ENCODE measurements at regions of chr20 and their contacts with region 1.

Region 1: DNA sequence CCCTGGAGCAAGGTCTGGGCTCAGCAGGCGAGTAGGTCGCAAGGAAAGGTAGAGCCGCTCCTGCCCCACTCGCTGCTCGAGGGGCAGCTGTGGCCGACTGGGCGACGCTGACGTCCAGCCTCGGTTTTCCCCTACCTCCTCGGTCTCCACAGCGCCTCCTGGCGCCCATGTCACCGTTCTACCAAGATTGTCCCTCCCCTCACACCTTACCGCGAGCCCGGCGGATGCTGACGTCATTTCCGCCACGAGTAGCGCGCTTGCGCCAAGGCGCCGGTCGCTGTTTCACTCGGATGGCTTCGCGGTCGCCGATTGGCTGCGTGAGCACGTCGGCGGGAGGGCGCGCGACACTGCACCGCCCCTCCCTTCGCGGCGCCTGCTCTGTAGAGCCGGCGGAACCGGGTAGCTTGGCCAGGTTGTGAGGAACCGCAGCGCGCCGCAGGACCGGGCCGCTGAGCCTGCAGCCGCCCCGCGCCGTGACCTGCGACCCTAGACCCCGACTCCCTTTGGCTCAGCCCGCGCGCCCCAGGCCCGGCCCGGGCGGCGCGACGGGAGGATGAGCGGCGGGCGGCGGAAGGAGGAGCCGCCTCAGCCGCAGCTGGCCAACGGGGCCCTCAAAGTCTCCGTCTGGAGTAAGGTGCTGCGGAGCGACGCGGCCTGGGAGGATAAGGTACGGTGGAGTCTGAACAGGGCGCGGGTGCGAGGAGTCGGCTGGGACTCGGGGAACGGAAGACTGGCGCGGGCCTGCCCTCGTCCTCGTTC is at the start of gene RAB5IF:
- DNase-seq: peak; percentile 99 to 100
- ATAC-seq: peak; percentile 81 to 95 (median 84)
- H3K4me3 ChIP-seq: peak within 1 kb of the TSS; percentile 89
- H3K4me3 Mint-ChIP-seq: peak within 1 kb of the TSS; percentile 98
- H3K27ac ChIP-seq: peak within 1 kb of the TSS; percentile 91
- H3K27ac Mint-ChIP-seq: peak within 1 kb of the TSS; percentile 99
- H3K4me1 ChIP-seq: peaks cover 35% of the 10 kb centered on the region
- H3K4me1 Mint-ChIP-seq: peaks cover 29 to 38% of the 10 kb centered on the region in 2 donors
- H3K27me3 ChIP-seq: no peaks in the 10 kb centered on the region
- H3K27me3 Mint-ChIP-seq: no peaks in the 10 kb centered on the region
- CTCF ChIP-seq: peak; percentile 87
- total RNA-seq, gene RAB5IF: 158 to 265 (median 247) TPM

Region 2: GRCh38 chr20:36550797-36551299 is 54.7 kb before region 1 on chr20:
- intact Hi-C with region 1: loop called (anchors 2 kb)
- DNase-seq: no peak
- ATAC-seq: no peak
- H3K4me3 ChIP-seq: no peak overlapping the region
- H3K4me3 Mint-ChIP-seq: no peak overlapping the region
- H3K27ac ChIP-seq: no peak overlapping the region
- H3K27ac Mint-ChIP-seq: no peak overlapping the region
- H3K4me1 ChIP-seq: no peaks in the 10 kb centered on the region
- H3K4me1 Mint-ChIP-seq: no peaks in the 10 kb centered on the region
- H3K27me3 ChIP-seq: no peaks in the 10 kb centered on the region
- H3K27me3 Mint-ChIP-seq: no peaks in the 10 kb centered on the region
- CTCF ChIP-seq: no peak

Region 3: GRCh38 chr20:36562724-36563123 is 42.9 kb before region 1 on chr20:
- intact Hi-C with region 1: loop called (anchors 1 kb)
- DNase-seq: no peak
- ATAC-seq: no peak
- H3K4me3 ChIP-seq: no peak overlapping the region
- H3K4me3 Mint-ChIP-seq: no peak overlapping the region
- H3K27ac ChIP-seq: no peak overlapping the region
- H3K27ac Mint-ChIP-seq: peak overlapping the region; percentile 86 to 90
- H3K4me1 ChIP-seq: peaks cover 16% of the 10 kb centered on the region
- H3K4me1 Mint-ChIP-seq: peaks cover 19 to 20% of the 10 kb centered on the region in 2 donors
- H3K27me3 ChIP-seq: no peaks in the 10 kb centered on the region
- H3K27me3 Mint-ChIP-seq: no peaks in the 10 kb centered on the region
- CTCF ChIP-seq: no peak

Region 4: DNA sequence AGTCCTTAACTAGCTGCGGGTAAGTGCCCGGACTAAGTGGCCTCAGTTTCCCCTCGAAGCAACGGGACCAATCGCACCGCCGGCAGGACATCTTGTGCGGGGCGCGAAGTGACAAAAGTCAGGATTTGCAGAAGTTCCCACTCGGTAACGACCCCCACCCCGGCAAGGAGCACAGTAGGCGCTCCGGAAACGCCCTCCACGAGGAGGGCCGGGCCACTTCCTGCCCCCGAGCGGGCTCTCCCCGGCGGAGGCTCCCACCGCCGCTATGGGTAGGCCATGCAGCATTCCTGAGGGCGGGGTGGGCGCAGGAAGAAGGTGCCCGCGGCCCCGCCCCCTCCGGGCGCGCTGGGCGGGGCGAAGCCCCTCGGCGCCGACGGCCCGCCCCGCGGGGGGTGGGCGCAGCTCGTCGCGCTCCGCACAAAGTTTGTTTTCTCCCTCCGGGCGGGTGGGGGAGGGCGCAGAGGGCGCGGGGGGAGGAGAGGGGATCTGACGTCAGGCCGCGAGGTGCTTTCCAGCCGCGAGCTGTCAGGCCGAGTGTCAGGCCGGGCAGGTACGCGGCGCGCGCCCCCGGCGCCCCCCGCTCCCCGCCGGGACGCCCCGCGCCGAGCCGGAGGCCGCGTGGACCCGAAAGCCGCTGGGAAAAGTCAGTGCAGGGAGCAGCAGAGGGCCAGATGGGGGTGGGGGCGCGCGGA is 32.3 kb before region 1 on chr20 and contains the start of gene TGIF2:
- intact Hi-C with region 1: loop called (anchors 1 kb)
- DNase-seq: peak; percentile 78 to 96
- ATAC-seq: peak; percentile 67 to 89 (median 81)
- H3K4me3 ChIP-seq: peak within 1 kb of the TSS; percentile 100
- H3K4me3 Mint-ChIP-seq: peak within 1 kb of the TSS; percentile 92
- H3K27ac ChIP-seq: peak within 1 kb of the TSS; percentile 98
- H3K27ac Mint-ChIP-seq: peak within 1 kb of the TSS; percentile 90 to 93
- H3K4me1 ChIP-seq: peaks cover 23% of the 10 kb centered on the region
- H3K4me1 Mint-ChIP-seq: peaks cover 28 to 31% of the 10 kb centered on the region in 2 donors
- H3K27me3 ChIP-seq: no peaks in the 10 kb centered on the region
- H3K27me3 Mint-ChIP-seq: no peaks in the 10 kb centered on the region
- CTCF ChIP-seq: no peak
- total RNA-seq, gene TGIF2: 19.9 to 28.5 (median 25.9) TPM

Region 5: GRCh38 chr20:36591854-36592641 is 13.5 kb before region 1 on chr20:
- intact Hi-C with region 1: loop called (anchors 1 kb)
- DNase-seq: peak in 1 of 2 donors; percentile 79
- ATAC-seq: no peak
- H3K4me3 ChIP-seq: no peak overlapping the region
- H3K4me3 Mint-ChIP-seq: no peak overlapping the region
- H3K27ac ChIP-seq: no peak overlapping the region
- H3K27ac Mint-ChIP-seq: peak overlapping the region; percentile 56 to 73
- H3K4me1 ChIP-seq: peaks cover 35% of the 10 kb centered on the region
- H3K4me1 Mint-ChIP-seq: peaks cover 10 to 25% of the 10 kb centered on the region in 2 donors
- H3K27me3 ChIP-seq: no peaks in the 10 kb centered on the region
- H3K27me3 Mint-ChIP-seq: no peaks in the 10 kb centered on the region
- CTCF ChIP-seq: no peak

Region 6: DNA sequence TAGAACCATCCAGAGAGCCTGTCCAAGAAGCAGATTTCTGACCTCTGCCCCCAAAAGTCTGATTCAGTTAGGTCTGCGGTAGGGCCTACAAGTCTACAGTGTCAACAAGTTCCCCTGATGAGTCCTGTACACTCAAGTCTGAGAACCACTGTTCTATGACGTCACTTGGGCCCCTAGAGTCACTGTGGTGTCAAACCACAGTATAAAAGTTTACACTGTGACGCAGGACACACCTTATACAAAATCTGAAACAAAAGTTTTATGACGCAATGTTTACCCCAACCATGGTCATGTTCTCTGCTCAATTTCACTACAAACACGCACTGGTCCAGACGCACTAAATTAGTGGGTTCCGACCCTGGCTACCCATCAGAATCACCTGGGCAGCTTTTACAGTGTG is 22.5 kb after region 1 on chr20:
- intact Hi-C with region 1: loop called (anchors 1 kb)
- DNase-seq: peak; percentile 61 to 81
- ATAC-seq: peak; percentile 73 to 88 (median 80)
- H3K4me3 ChIP-seq: no peak overlapping the region
- H3K4me3 Mint-ChIP-seq: peak overlapping the region; percentile 66
- H3K27ac ChIP-seq: peak overlapping the region; percentile 77
- H3K27ac Mint-ChIP-seq: peak overlapping the region; percentile 93 to 95
- H3K4me1 ChIP-seq: peaks cover 50% of the 10 kb centered on the region
- H3K4me1 Mint-ChIP-seq: peaks cover 51 to 63% of the 10 kb centered on the region in 2 donors
- H3K27me3 ChIP-seq: no peaks in the 10 kb centered on the region
- H3K27me3 Mint-ChIP-seq: no peaks in the 10 kb centered on the region
- CTCF ChIP-seq: no peak

Measured in natural killer cell (primary cell).